Left ventricle myocardium superior (tissue), 1 donor: ENCODE measurements at regions of chr1 and their contacts with region 1.

Region 1: GRCh38 chr1:115717541-115717940 is 51.0 kb downstream of the CASQ2 start:
- DNase-seq: peak; percentile 68
- ATAC-seq: peak; percentile 3

Region 2: GRCh38 chr1:115642168-115643072 is 75.1 kb before region 1 on chr1:
- intact Hi-C with region 1: no loop called
- DNase-seq: peak; percentile 66
- ATAC-seq: peak; percentile 78

Region 3: DNA sequence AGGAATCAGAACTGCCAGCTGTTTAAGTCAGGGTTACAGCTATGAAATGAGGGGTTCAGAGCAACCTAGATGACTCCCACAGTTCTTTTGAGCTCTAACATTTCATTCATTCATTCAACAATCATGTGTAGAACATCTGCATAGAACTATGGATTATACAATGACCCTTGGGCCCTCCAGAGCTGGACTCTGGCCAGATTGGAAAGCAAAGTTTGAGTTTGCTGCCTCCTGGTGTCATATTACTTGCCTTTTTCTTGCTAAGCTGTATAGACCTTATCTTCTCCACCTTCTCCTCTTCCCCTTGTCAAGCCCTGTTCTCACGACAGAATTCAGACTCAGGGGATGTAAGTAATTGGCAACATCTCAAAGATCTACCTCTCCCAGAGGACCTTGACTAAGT is 47.0 kb after region 1 on chr1:
- intact Hi-C with region 1: loop called (anchors 10 kb)
- DNase-seq: peak; percentile 37
- ATAC-seq: peak; percentile 3